IMR-90 (cell line): ENCODE measurements at regions of chr4 and their contacts with region 1.

Region 1: DNA sequence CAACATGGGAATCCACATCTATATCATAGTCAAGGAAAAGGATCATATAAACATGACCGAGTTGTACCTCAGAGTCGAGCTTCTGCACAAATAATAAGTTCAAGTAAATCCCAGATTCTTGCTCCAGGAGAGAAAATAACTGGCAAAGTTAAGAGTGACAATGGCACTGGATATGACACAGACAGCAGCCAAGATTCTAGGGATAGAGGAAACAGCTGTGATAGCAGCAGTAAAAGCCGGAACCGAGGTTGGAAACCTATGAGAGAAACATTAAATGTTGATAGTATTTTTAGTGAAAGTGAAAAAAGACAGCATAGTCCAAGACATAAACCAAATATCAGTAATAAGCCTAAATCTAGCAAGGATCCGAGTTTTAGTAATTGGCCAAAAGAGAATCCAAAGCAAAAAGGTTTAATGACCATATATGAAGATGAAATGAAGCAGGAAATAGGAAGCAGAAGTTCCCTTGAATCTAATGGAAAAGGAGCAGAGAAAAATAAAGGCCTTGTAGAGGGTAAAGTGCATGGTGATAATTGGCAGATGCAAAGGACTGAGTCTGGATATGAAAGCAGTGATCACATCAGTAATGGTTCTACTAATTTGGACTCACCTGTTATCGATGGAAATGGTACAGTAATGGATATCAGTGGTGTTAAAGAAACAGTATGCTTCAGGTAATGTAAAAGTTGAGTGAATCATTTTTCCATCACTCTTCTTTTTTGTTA is 50.4 kb downstream of the FABP2 start:
- DNase-seq: no peak
- ATAC-seq: no peak
- H3K4me3 ChIP-seq: no peak overlapping the region
- H3K27ac ChIP-seq: no peak overlapping the region
- H3K4me1 ChIP-seq: no peaks in the 10 kb centered on the region
- H3K27me3 ChIP-seq: no peaks in the 10 kb centered on the region
- CTCF ChIP-seq: no peak
- POLR2A ChIP-seq: no peak
- RAD21 ChIP-seq: no peak

Region 2: DNA sequence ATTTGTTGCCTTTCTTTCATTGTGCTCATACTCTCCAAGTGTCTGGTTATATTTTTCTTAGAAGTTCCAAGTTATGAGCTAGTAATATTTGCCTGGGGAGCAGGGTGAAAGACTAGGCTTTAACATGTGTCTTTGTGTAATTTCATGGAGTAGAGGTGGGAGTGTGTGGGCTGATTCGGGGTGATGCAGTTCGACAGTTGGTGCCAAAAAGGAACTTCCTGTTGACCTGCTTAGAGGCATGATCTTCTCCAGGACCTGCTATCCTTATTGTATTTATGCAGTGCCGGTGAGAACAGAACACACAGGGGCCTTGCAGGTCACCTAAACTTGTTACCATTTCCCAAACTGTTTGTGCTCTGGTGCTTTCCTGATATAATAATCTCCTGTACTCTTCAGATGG is 37.8 kb before region 1 on chr4:
- CTCF ChIA-PET with region 1: no interaction called
- POLR2A ChIA-PET with region 1: no interaction called
- dilution Hi-C with region 1: no loop called
- in situ Hi-C with region 1: no loop called
- intact Hi-C with region 1: loop called (anchors 5 kb)
- DNase-seq: no peak
- ATAC-seq: no peak; the same call in 1 of the 2 replicates
- H3K4me3 ChIP-seq: no peak overlapping the region
- H3K27ac ChIP-seq: no peak overlapping the region
- H3K4me1 ChIP-seq: peaks cover 6% of the 10 kb centered on the region
- H3K27me3 ChIP-seq: no peaks in the 10 kb centered on the region
- CTCF ChIP-seq: no peak
- POLR2A ChIP-seq: no peak
- RAD21 ChIP-seq: no peak